ENCODE measurements at regions of chr19 and their contacts with region 1.

Region 1: DNA sequence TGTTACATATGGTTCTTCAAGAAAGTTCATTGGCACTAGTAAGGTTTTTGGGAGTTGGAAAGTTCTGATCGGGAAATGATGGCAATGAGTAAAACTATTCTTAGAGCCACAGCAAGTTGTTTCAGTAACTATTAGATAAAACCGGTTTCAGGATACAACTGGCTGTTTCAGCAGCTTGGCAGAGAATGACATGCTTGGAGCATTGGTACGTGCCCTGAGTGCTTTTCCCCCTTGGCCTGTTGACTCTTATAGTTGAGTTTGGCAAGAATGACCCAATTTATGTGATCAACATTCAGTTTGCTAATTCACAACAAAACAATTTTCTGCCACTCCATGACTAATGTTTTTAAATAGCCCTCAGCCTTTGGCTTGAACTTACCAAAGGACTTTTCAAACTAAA is 10.8 kb upstream of the ZNF491 start:
- DNase-seq: no peak
- H3K4me3 ChIP-seq: no peak overlapping the region
- H3K27ac ChIP-seq: no peak overlapping the region
- H3K27me3 ChIP-seq: no peaks in the 10 kb centered on the region
- CTCF ChIP-seq: no peak

Region 2: GRCh38 chr19:11673608-11674041 is 113.9 kb before region 1 on chr19:
- intact Hi-C with region 1: loop called in 1 of 2 experiments (anchors 5 kb)
- DNase-seq: peak in 9 of 10 donors; percentile 51 to 78 (median 64)
- H3K4me3 ChIP-seq: peak overlapping the region; percentile 36 to 84 (median 62)
- H3K27ac ChIP-seq: peak overlapping the region in 2 of 59 donors; percentile 53 to 61
- H3K27me3 ChIP-seq: peaks cover 0 to 6% (median 0%) of the 10 kb centered on the region in 45 donors
- CTCF ChIP-seq: peak; percentile 48 to 92 (median 76)

Region 3: GRCh38 chr19:11735406-11735805 is 52.1 kb before region 1 on chr19:
- intact Hi-C with region 1: no loop called
- DNase-seq: no peak
- H3K4me3 ChIP-seq: no peak overlapping the region
- H3K27ac ChIP-seq: no peak overlapping the region
- H3K27me3 ChIP-seq: no peaks in the 10 kb centered on the region
- CTCF ChIP-seq: no peak

Region 4: GRCh38 chr19:11747277-11747676 is 40.3 kb before region 1 on chr19:
- intact Hi-C with region 1: no loop called
- DNase-seq: no peak
- H3K4me3 ChIP-seq: no peak overlapping the region
- H3K27ac ChIP-seq: no peak overlapping the region
- H3K27me3 ChIP-seq: no peaks in the 10 kb centered on the region
- CTCF ChIP-seq: no peak

Region 5: GRCh38 chr19:11843722-11844121 is 56.2 kb after region 1 on chr19:
- intact Hi-C with region 1: no loop called
- DNase-seq: no peak
- H3K4me3 ChIP-seq: no peak overlapping the region
- H3K27ac ChIP-seq: no peak overlapping the region
- H3K27me3 ChIP-seq: no peaks in the 10 kb centered on the region
- CTCF ChIP-seq: no peak

Region 6: DNA sequence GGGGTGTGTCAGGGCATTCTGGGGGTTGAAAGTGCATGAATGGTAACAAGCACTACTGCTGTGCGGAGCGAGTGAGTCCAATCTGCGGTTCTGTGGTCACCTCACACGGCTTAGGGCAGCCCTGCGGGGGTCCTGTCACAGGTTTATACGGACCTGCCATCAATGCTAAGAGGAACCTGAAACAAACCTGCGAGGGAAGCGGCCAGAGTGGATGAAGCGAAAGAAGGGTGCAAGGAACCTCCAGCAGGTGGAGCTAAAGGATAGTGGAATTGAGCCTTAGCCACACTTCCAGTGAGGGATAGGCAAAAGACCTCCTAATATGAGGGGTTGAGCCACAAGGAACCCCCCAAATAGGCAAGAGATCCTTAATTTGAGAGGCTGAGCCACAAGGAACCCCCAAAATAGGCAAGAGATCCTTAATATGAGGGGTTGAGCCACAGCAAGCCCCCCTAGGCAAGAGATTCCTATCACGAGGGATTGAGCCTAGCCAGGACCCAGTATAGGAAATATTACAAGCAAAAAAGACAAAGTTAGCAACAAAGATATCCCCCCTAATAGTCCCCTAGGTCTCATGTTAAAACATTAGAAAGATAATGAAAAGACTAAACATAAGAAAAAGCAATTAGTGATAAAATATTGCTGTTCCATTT is 93.7 kb after region 1 on chr19:
- intact Hi-C with region 1: no loop called
- DNase-seq: peak in 7 of 10 donors; percentile 31 to 63 (median 39)
- H3K4me3 ChIP-seq: peak overlapping the region in 9 of 59 donors; percentile 21 to 34 (median 23)
- H3K27ac ChIP-seq: no peak overlapping the region
- H3K27me3 ChIP-seq: no peaks in the 10 kb centered on the region
- CTCF ChIP-seq: peak; percentile 27 to 83 (median 66)